ENCODE measurements at regions of chr13 and their contacts with region 1.

Region 1: GRCh38 chr13:52968074-52968700 is 60.4 kb upstream of the OLFM4 start:
- DNase-seq: peak; percentile 77
- ATAC-seq: peak; percentile 77
- H3K4me3 Mint-ChIP-seq: no peak overlapping the region
- H3K27ac Mint-ChIP-seq: no peak overlapping the region
- H3K4me1 Mint-ChIP-seq: no peaks in the 10 kb centered on the region
- H3K27me3 Mint-ChIP-seq: peaks cover 7% of the 10 kb centered on the region
- CTCF ChIP-seq: peak; percentile 93

Region 2: GRCh38 chr13:52738719-52739467 is 229.3 kb before region 1 on chr13:
- CTCF ChIA-PET with region 1: interaction called, 10 read pairs
- POLR2A ChIA-PET with region 1: no interaction called
- intact Hi-C with region 1: no loop called
- DNase-seq: peak; percentile 42
- ATAC-seq: peak; percentile 83
- H3K4me3 Mint-ChIP-seq: peak overlapping the region; percentile 48
- H3K27ac Mint-ChIP-seq: no peak overlapping the region
- H3K4me1 Mint-ChIP-seq: peaks cover 6% of the 10 kb centered on the region
- H3K27me3 Mint-ChIP-seq: peaks cover 38% of the 10 kb centered on the region
- CTCF ChIP-seq: peak; percentile 74

Region 3: GRCh38 chr13:52945348-52945747 is 22.8 kb before region 1 on chr13:
- CTCF ChIA-PET with region 1: interaction called, 10 read pairs
- POLR2A ChIA-PET with region 1: interaction called, 3 read pairs
- intact Hi-C with region 1: no loop called
- DNase-seq: no peak
- ATAC-seq: no peak
- H3K4me3 Mint-ChIP-seq: no peak overlapping the region
- H3K27ac Mint-ChIP-seq: no peak overlapping the region
- H3K4me1 Mint-ChIP-seq: no peaks in the 10 kb centered on the region
- H3K27me3 Mint-ChIP-seq: peaks cover 8% of the 10 kb centered on the region
- CTCF ChIP-seq: no peak

Region 4: DNA sequence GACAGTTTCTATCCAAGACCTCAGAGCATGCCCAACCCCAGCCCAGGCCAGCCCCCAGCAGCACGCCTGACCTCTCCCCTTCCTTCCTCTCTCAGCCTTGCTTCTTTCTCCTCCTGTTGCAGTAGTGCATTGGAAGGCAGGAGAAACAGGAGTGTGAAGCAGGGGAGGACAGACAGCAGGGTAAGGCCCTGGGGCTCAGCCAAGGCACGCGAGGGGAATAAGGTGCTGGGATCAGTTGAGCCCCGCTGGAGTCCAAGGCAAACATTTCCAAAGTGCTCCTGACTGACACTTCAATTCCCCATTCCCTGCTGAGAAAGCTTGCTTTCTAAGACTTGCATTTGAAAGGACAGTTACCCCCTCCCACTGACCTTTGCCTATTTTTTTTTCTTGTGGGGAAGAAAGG is 12.7 kb before region 1 on chr13:
- CTCF ChIA-PET with region 1: interaction called, 27 read pairs
- POLR2A ChIA-PET with region 1: no interaction called
- intact Hi-C with region 1: no loop called
- DNase-seq: no peak
- ATAC-seq: no peak
- H3K4me3 Mint-ChIP-seq: no peak overlapping the region
- H3K27ac Mint-ChIP-seq: no peak overlapping the region
- H3K4me1 Mint-ChIP-seq: no peaks in the 10 kb centered on the region
- H3K27me3 Mint-ChIP-seq: peaks cover 4% of the 10 kb centered on the region
- CTCF ChIP-seq: no peak

Region 5: DNA sequence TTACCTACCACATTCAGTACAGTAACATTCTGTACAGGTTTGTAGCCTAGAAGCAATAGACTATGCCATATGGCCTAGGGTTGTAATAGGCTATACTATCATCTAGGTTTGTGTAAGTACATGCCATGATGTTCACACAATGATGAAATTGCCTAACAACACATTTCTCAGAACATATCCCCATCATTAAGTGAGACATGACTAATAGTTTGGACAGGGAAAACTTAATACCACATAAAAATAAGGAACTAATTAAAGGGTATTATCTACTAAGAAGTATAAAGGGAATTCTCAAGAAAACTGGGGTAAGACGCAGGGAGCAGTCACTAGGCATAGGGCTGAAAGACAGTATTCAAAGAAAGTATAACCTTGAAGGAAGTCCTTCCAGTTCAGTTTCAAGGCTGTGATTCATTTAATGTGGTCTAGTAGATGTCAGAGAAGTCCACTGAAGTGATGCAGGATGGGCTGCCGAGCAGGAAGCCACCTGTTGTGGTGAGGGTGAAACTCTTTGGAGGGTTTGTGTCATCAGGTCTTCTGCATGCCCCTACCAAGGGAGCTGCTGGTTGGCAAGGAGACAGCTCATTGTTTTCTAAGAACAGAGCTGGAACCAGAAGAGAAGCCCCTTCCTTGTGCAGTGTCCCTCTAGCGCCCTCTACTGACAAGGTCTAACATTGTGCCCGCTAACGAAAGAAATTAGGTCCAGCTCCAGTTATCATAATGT is 183.3 kb after region 1 on chr13:
- CTCF ChIA-PET with region 1: interaction called, 14 read pairs
- POLR2A ChIA-PET with region 1: no interaction called
- intact Hi-C with region 1: no loop called
- DNase-seq: peak; percentile 75
- ATAC-seq: peak; percentile 97
- H3K4me3 Mint-ChIP-seq: no peak overlapping the region
- H3K27ac Mint-ChIP-seq: no peak overlapping the region
- H3K4me1 Mint-ChIP-seq: peaks cover 8% of the 10 kb centered on the region
- H3K27me3 Mint-ChIP-seq: peaks cover 10% of the 10 kb centered on the region
- CTCF ChIP-seq: peak; percentile 71